ENCODE measurements at regions of chr2 and their contacts with region 1.

Region 1: DNA sequence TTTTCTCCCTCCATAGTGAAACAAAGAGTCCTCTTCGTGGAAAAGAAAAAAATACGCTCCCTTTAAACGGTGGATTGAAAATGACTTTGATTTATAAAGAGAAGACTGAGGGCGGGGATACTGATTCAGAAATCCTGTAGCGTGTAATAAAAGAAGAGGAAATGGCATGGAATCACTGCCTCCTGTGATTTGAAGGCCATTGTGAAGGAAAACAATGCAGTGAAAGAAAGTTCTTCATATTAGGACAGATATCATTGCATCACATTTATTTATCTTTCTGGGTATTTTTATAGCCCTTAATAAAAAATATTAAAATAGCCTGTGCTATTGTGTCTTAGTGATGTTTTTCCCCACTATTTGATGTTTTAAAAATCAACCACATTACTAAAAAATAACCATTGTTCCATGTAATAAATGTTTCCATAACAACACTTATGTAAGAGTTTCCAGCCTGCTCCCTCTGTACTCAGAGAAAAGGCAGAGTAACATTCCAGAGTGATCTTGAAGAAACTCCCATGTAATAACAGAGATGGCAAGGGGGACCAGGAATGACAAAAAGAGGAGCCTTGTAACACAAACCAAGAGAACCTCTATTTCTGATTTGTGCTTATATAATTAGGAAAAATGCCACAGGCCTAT is 8.0 kb downstream of the MRPL33 start:
- DNase-seq: peak; percentile 94
- H3K4me3 ChIP-seq: no peak overlapping the region
- H3K27ac ChIP-seq: peak overlapping the region; percentile 96
- H3K4me1 ChIP-seq: peaks cover 23% of the 10 kb centered on the region
- H3K27me3 ChIP-seq: no peaks in the 10 kb centered on the region
- CTCF ChIP-seq: no peak
- POLR2A ChIP-seq: peak; percentile 15

Region 2: DNA sequence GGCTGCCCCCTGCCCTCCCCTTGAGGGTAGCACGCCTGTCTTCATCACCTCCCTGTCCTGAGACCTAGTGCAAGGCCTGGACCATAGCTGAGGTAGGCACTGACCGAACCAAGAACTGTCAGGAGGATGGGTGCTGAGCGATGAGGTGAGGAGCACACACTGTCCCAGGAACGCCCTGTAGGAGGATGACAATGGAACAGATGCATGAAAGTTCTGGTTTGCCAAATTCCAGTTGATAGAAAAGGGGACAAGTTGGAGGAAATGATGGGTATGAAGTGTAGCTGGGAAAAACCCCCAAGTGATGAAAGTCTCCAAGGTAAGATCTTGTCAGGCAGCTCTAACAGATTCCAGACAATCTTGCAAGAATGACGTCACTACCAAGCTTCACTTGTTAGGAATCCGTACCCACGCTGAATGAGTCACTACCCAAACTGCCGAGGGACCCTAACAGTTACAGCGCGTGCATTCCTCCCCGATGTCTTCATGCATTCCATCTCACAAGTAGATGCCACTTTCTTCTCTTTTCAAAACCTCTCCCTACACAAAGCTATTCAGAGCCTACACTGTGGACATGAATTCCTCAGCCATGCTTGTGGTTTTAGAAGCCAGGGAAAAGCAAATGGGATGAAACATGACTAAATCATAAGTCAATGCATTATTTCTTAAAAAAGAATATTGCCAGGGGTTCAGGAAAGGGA is 19.6 kb after region 1 on chr2:
- CTCF ChIA-PET with region 1: interaction called, 8 read pairs
- POLR2A ChIA-PET with region 1: no interaction called
- dilution Hi-C with region 1: no loop called
- intact Hi-C with region 1: loop called (anchors 1 kb)
- DNase-seq: peak; percentile 93
- H3K4me3 ChIP-seq: no peak overlapping the region
- H3K27ac ChIP-seq: peak overlapping the region; percentile 94
- H3K4me1 ChIP-seq: peaks cover 34% of the 10 kb centered on the region
- H3K27me3 ChIP-seq: no peaks in the 10 kb centered on the region
- CTCF ChIP-seq: no peak
- POLR2A ChIP-seq: no peak

Region 3: GRCh38 chr2:27885234-27885633 is 105.7 kb after region 1 on chr2:
- CTCF ChIA-PET with region 1: no interaction called
- POLR2A ChIA-PET with region 1: interaction called, 3 read pairs
- dilution Hi-C with region 1: no loop called
- intact Hi-C with region 1: loop called (anchors 2 kb)
- DNase-seq: no peak
- H3K4me3 ChIP-seq: no peak overlapping the region
- H3K27ac ChIP-seq: peak overlapping the region; percentile 94
- H3K4me1 ChIP-seq: peaks cover 29% of the 10 kb centered on the region
- H3K27me3 ChIP-seq: no peaks in the 10 kb centered on the region
- CTCF ChIP-seq: no peak
- POLR2A ChIP-seq: no peak

Measured in endothelial cell of umbilical vein (primary cell).